Activated CD4-positive, alpha-beta memory T cell treated with anti-CD3 and anti-CD28 coated beads for 36 hours (primary cell): ENCODE measurements at regions of chr2 and their contacts with region 1.

Region 1: GRCh38 chr2:160324161-160324800 is 124.2 kb upstream of the ITGB6 start:
- DNase-seq: peak; percentile 62
- H3K4me3 Mint-ChIP-seq: no peak overlapping the region
- H3K27ac Mint-ChIP-seq: no peak overlapping the region
- H3K4me1 Mint-ChIP-seq: peaks cover 80% of the 10 kb centered on the region
- H3K27me3 Mint-ChIP-seq: no peaks in the 10 kb centered on the region

Region 2: DNA sequence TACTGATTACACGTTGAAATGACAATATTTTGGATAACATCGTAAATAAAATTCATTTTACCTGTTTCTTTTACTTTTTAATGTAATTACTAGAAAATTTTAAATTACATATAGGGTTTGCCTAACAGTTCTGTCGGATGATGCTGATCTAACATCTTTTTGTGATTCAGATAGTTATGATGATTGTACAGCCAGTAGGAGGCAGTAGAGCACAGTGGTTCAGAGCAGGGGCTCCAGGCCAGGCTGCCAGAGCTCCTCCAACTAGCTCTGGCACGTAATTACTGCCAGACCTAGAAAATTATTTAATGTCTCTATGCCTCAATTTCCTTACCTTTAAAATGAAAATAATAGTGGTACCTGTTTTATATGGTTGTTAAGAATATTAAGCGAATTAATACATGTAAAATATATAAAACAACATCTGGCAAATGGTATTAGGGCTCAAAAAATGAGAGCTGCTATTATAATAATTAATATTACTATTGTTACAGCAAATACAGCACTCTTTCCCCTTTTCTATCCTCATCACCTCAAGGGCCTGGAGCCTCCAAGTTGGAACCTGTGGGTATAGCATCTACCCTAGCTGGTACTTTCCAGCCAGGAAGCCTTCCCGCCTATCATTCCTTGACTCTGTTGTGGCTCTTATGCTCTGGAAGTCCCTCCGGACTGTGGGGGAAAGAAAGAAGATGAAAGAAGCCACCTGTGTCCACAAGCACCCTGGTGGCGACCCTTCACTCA is 214.2 kb before region 1 on chr2:
- CTCF ChIA-PET with region 1: interaction called, 17 read pairs
- POLR2A ChIA-PET with region 1: no interaction called
- intact Hi-C with region 1: no loop called
- DNase-seq: peak; percentile 65
- H3K4me3 Mint-ChIP-seq: no peak overlapping the region
- H3K27ac Mint-ChIP-seq: no peak overlapping the region
- H3K4me1 Mint-ChIP-seq: no peaks in the 10 kb centered on the region
- H3K27me3 Mint-ChIP-seq: peaks cover 21% of the 10 kb centered on the region

Region 3: DNA sequence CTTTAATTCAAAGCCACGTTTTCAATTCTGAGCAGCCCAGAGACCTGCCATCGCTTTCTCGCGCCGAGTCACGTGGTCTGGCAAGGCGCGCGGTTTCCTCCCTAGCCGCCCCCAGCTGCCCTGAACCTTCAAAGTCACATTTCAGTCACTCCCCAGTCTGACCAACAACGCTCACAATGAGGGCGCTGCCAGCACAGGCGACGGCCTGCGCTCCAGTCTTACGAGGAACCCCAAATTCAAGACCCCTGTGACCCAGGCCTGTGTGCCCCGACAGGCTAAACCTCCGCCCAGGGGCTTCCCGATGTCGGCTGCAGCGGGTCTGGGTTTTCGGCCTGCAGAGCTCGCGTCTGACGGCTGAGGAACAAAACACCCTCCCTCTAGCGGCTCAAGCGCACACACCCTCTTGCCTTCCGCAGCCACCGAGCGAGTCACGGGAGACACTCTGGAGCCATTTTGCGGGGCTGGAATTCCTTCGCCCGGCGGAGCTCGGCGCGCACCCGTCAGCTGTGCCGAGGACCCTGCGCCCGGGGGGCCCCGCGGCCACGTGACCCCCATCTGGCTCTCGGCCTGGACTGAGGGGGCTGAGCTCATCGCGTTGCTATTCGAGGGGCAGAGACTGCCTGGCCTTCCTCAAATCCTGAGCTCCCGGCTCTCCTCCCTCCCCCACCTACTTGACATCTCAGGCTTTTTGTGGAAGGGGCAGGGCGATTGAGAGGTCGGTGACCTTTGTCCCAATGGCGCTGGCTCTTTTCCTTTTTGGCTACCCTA is 54.3 kb before region 1 on chr2:
- CTCF ChIA-PET with region 1: interaction called, 5 read pairs
- POLR2A ChIA-PET with region 1: interaction called, 7 read pairs
- intact Hi-C with region 1: loop called (anchors 1 kb)
- DNase-seq: peak; percentile 81
- H3K4me3 Mint-ChIP-seq: peak overlapping the region; percentile 63
- H3K27ac Mint-ChIP-seq: peak overlapping the region; percentile 28
- H3K4me1 Mint-ChIP-seq: peaks cover 45% of the 10 kb centered on the region
- H3K27me3 Mint-ChIP-seq: peaks cover 5% of the 10 kb centered on the region

Region 4: GRCh38 chr2:160375802-160376469 is 51.7 kb after region 1 on chr2:
- CTCF ChIA-PET with region 1: no interaction called
- POLR2A ChIA-PET with region 1: no interaction called
- intact Hi-C with region 1: no loop called
- DNase-seq: no peak
- H3K4me3 Mint-ChIP-seq: no peak overlapping the region
- H3K27ac Mint-ChIP-seq: no peak overlapping the region
- H3K4me1 Mint-ChIP-seq: peaks cover 82% of the 10 kb centered on the region
- H3K27me3 Mint-ChIP-seq: no peaks in the 10 kb centered on the region

Region 5: GRCh38 chr2:160429248-160430000 is 105.1 kb after region 1 on chr2:
- CTCF ChIA-PET with region 1: interaction called, 29 read pairs
- POLR2A ChIA-PET with region 1: no interaction called
- intact Hi-C with region 1: no loop called
- DNase-seq: no peak
- H3K4me3 Mint-ChIP-seq: no peak overlapping the region
- H3K27ac Mint-ChIP-seq: peak overlapping the region; percentile 69
- H3K4me1 Mint-ChIP-seq: peaks cover 58% of the 10 kb centered on the region
- H3K27me3 Mint-ChIP-seq: no peaks in the 10 kb centered on the region

Region 6: DNA sequence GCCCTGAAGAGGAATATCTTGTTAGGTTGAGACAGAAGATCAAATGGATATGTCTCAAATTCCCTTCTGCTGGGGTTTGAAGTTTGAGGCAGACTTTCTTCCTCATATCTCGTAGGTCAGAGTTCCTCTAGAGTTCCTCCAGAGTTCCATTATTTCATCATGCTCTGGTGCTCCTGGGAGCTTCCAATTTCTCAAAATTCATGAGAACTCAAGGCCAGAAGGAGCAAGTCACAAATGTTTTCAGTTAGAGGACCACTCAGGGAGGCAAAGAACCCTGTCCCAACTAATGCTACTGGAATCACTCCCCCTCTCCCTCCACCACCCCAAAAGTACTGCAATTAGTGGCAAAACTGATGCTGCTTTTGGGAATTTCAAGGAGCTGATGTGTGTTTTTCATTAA is 285.1 kb after region 1 on chr2:
- CTCF ChIA-PET with region 1: no interaction called
- POLR2A ChIA-PET with region 1: no interaction called
- intact Hi-C with region 1: no loop called
- DNase-seq: no peak
- H3K4me3 Mint-ChIP-seq: no peak overlapping the region
- H3K27ac Mint-ChIP-seq: no peak overlapping the region
- H3K4me1 Mint-ChIP-seq: peaks cover 14% of the 10 kb centered on the region
- H3K27me3 Mint-ChIP-seq: peaks cover 3% of the 10 kb centered on the region

Region 7: DNA sequence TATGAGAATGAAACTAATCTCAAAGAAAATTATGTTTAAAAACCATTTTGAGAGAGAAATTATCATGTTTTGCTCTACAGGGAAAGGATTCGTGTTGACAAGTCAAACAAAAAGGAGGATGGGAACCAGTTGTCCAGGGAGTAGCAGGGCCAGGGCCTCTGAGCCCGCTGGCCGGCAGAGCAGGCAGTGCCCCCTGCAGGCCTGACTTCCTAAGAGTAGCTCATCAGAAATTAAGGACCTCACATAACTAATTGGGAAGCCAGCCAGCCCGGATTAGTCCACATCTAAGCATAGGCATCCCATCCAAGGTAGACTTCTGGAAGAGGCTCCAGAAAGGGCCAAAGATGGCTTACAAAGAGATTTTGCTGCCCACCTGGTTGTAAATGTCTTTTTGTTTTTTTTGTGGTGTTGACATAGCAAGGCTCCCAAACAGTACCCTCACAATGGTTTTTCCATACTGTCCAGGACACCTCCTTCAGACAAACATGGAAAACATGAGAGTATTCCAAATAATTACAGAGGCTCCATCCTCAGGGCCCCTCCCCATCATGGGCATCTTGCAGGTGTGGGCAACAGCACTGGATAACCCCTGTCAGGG is 594.7 kb after region 1 on chr2:
- CTCF ChIA-PET with region 1: interaction called, 7 read pairs
- POLR2A ChIA-PET with region 1: no interaction called
- intact Hi-C with region 1: loop called (anchors 5 kb)
- DNase-seq: peak; percentile 49
- H3K4me3 Mint-ChIP-seq: no peak overlapping the region
- H3K27ac Mint-ChIP-seq: no peak overlapping the region
- H3K4me1 Mint-ChIP-seq: no peaks in the 10 kb centered on the region
- H3K27me3 Mint-ChIP-seq: no peaks in the 10 kb centered on the region

Region 8: DNA sequence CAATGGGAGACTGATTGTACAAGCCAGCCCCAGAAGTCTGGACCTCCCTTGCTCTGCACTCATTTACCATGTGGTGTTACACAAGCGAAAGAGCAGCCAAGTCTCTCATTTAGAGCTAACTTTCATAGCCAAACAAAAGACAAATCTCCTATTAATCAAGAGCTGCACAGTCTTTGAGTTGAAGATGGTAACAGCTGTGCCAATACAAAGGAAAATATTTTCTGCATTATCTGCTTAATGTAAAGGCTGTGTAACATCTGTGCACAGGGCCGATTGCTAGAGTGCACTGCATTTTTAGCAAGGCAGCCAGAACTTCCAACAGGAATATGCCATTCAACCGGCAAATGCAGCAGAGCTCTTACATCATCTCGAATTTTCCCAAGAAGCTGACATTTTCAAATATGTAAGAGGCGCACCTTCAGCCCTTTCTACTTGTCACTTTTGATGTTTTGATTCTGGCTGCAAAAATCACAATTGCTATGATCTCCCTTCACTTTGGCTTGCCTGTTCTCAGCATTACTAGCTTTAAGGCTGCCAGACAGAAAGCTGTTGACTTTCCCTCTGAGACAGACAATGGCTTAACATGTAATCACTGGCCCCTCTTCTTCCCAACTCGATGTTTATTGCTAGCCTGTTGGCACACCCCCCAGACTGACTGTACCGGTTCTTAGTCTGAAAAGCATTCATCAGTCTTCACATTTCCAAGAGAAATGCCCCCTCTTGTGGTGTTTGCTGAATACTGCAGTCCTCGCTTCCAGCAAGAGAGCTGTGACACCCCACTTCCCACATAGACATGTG is 739.1 kb after region 1 on chr2:
- CTCF ChIA-PET with region 1: interaction called, 16 read pairs
- POLR2A ChIA-PET with region 1: no interaction called
- intact Hi-C with region 1: no loop called
- DNase-seq: peak; percentile 74
- H3K4me3 Mint-ChIP-seq: no peak overlapping the region
- H3K27ac Mint-ChIP-seq: no peak overlapping the region
- H3K4me1 Mint-ChIP-seq: peaks cover 10% of the 10 kb centered on the region
- H3K27me3 Mint-ChIP-seq: no peaks in the 10 kb centered on the region